SK-N-SH (cell line): ENCODE measurements at regions of chr17 and their contacts with region 1.

Region 1: DNA sequence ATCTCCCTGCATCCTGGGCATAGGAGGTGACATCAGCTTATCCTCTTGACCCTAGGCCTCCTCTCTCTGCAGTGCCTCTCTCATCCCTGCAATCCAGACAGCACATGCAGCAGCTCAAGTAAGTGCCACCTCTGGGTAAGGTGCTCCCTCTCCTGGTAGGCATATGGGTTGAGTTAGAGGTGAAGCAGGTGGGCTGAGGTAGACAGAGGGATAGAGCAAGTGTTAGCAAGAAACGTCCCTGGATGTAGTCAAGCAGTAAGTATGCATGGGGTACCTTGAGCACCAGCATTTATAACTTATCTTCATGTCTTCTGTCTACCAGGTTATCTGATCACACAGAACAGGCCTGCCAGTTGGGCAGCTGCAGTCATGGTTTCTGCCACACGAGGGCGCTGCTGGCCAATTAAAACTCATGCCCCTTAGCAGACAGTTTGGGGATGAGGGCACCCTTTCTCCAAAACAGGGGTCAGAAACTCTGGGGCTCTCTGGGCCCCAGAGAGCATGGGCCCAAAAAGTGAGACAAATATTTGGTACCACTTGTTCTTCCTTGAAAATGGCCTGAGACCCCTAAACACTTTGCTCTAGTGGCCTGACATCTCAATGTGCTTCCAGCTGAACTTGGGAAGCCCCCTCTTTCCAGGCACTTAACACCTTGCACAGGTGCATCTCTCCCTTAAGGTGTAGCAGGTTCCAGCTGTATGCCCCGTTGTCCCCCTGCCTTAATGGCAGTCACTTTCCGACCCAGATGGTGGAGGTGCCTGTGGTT is 59.8 kb downstream of the NEUROD2 start:
- DNase-seq: peak; percentile 76
- H3K4me3 ChIP-seq: no peak overlapping the region; a peak in 1 of 4 replicates
- H3K27ac ChIP-seq: no peak overlapping the region
- H3K4me1 ChIP-seq: peaks cover 8 to 9% of the 10 kb centered on the region in 2 experiments; a peak in 1 of 4 replicates
- H3K27me3 ChIP-seq: no peaks in the 10 kb centered on the region
- CTCF ChIP-seq: peak; percentile 98
- EP300 ChIP-seq: no peak
- RAD21 ChIP-seq: peak; percentile 82

Region 2: GRCh38 chr17:39357986-39358385 is 189.9 kb before region 1 on chr17:
- CTCF ChIA-PET with region 1: no interaction called
- POLR2A ChIA-PET with region 1: no interaction called
- DNase-seq: no peak
- H3K4me3 ChIP-seq: no peak overlapping the region
- H3K27ac ChIP-seq: no peak overlapping the region
- H3K4me1 ChIP-seq: no peaks in the 10 kb centered on the region
- H3K27me3 ChIP-seq: no peaks in the 10 kb centered on the region
- CTCF ChIP-seq: no peak
- EP300 ChIP-seq: no peak
- RAD21 ChIP-seq: no peak

Region 3: GRCh38 chr17:39527220-39527813 is 20.6 kb before region 1 on chr17:
- CTCF ChIA-PET with region 1: interaction called, 17 read pairs
- POLR2A ChIA-PET with region 1: no interaction called
- DNase-seq: no peak
- H3K4me3 ChIP-seq: no peak overlapping the region
- H3K27ac ChIP-seq: no peak overlapping the region
- H3K4me1 ChIP-seq: no peaks in the 10 kb centered on the region
- H3K27me3 ChIP-seq: no peaks in the 10 kb centered on the region
- CTCF ChIP-seq: peak; percentile 59
- EP300 ChIP-seq: no peak
- RAD21 ChIP-seq: peak; percentile 12; the same call in 1 of the 2 replicates

Region 4: DNA sequence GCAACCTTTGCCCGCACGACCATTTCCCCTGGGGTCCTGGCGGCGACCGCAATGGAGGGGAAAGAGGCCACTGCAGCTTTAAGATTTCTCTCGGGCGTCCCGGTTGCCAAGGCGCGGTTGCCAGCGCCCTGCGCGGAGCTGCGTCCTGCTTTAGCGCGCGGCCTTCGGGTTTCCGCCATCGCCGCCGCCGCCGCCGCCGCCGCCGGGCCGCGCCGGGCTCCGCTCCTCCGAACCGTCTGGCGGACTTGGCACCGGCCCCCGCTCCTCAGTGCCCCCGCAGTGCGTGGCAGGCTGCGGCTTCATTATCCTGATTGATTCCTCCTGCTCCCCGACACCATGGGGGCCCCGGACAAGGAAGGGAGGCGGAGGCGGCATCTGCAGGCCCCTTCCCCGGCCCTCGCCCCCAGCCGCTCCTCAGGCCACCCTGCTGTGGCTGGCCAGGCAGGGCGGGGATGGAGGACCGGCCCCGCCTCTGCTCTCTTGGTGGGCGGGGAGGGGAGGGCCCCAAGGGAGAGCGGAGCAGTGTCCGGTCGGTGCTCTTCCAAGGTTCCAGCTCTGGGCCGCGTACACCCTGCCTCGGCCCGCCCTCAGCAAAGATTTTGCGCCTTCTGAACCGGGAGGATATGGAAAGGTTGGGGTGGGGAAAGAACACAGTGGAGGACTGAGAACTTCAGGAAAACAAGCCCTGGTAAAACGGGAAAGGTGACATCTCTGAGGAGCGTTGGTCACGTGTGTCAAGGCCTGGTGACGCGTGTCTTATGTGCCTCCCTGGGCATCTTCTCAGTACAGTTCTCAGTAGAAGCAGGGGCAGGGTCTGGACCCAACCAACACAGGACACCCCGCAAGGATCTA is 25.8 kb after region 1 on chr17:
- CTCF ChIA-PET with region 1: interaction called, 93 read pairs
- POLR2A ChIA-PET with region 1: no interaction called
- DNase-seq: peak; percentile 96
- H3K4me3 ChIP-seq: peak overlapping the region; percentile 63 to 68
- H3K27ac ChIP-seq: peak overlapping the region; percentile 68 to 77; a peak in 3 of 4 replicates
- H3K4me1 ChIP-seq: peaks cover 0 to 8% of the 10 kb centered on the region in 2 experiments; a peak in 1 of 4 replicates
- H3K27me3 ChIP-seq: no peaks in the 10 kb centered on the region
- CTCF ChIP-seq: no peak
- EP300 ChIP-seq: no peak; a peak in 1 of 4 replicates
- RAD21 ChIP-seq: no peak

Region 5: GRCh38 chr17:39603304-39604016 is 55.6 kb after region 1 on chr17:
- CTCF ChIA-PET with region 1: interaction called, 17 read pairs
- POLR2A ChIA-PET with region 1: no interaction called
- DNase-seq: no peak
- H3K4me3 ChIP-seq: no peak overlapping the region
- H3K27ac ChIP-seq: no peak overlapping the region
- H3K4me1 ChIP-seq: peaks cover 6 to 15% of the 10 kb centered on the region in 2 experiments
- H3K27me3 ChIP-seq: peaks cover 99% of the 10 kb centered on the region
- CTCF ChIP-seq: no peak
- EP300 ChIP-seq: no peak
- RAD21 ChIP-seq: no peak

Region 6: GRCh38 chr17:39653662-39654331 is 105.9 kb after region 1 on chr17:
- CTCF ChIA-PET with region 1: interaction called, 13 read pairs
- POLR2A ChIA-PET with region 1: no interaction called
- DNase-seq: peak; percentile 92
- H3K4me3 ChIP-seq: no peak overlapping the region; a peak in 1 of 4 replicates
- H3K27ac ChIP-seq: no peak overlapping the region
- H3K4me1 ChIP-seq: peaks cover 0 to 4% of the 10 kb centered on the region in 2 experiments; a peak in 1 of 4 replicates
- H3K27me3 ChIP-seq: no peaks in the 10 kb centered on the region
- CTCF ChIP-seq: peak; percentile 93
- EP300 ChIP-seq: no peak
- RAD21 ChIP-seq: peak; percentile 26; the same call in 1 of the 2 replicates